Vagina (tissue), 2 donors: ENCODE measurements at regions of chr3 and their contacts with region 1.

Region 1: GRCh38 chr3:64484289-64484992 is 203.4 kb downstream of the ADAMTS9 start:
- DNase-seq: no peak
- H3K4me3 ChIP-seq: no peak overlapping the region
- H3K27ac ChIP-seq: no peak overlapping the region
- H3K4me1 ChIP-seq: peaks cover 4% of the 10 kb centered on the region
- H3K27me3 ChIP-seq: no peaks in the 10 kb centered on the region
- CTCF ChIP-seq: peak; percentile 78 to 93 (median 89)
- POLR2A ChIP-seq: no peak

Region 2: GRCh38 chr3:64030741-64031140 is 453.7 kb before region 1 on chr3:
- intact Hi-C with region 1: loop called (anchors 5 kb)
- DNase-seq: no peak
- H3K4me3 ChIP-seq: peak overlapping the region; percentile 3 to 11
- H3K27ac ChIP-seq: peak overlapping the region; percentile 68
- H3K4me1 ChIP-seq: peaks cover 23% of the 10 kb centered on the region
- H3K27me3 ChIP-seq: no peaks in the 10 kb centered on the region
- CTCF ChIP-seq: peak; percentile 86 to 97 (median 90)
- POLR2A ChIP-seq: no peak